ENCODE measurements at regions of chr3 and their contacts with region 1.

Region 1: DNA sequence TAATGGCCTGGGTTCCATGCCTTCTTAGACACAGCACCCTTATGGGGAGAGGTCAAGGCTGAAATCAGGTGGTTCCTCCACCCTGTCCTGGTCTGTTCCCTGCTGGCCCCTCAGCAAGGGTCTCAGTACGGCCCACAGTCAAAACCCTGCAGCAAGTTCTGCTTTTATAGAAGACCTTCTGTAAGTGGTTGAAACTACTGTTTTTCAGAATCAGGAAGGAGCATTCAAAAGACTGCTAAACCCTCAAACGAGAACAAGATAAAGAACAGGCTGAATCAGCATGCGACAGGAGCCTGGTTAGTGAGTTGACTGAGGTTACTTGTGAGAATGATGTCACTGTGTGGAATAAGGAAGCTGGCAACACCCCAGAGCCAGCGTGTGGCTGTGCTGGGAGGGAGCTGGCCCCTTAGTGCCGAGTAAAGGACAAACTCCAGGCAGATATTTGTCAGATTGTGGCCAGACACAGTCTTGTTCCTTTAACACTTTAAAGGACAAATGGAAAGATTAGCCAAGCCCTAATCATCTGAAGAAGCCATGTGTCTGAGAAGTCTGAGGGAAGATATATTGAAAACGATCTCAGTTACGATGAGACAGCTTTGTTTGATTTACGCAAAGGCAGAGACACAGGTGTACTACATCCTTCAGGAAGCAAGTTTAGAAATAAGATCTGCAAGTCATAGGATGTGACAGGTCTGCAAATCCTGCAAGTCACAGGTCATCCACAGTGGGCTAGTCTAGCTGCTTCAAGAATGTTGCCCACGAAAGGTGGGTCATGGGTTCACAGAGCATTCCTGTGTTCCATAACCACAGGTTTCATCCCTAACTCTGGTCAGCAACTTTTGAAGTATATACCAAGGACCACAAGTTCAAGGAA is 54.0 kb downstream of the B3GNT5 start:
- DNase-seq: peak; percentile 65
- H3K4me3 Mint-ChIP-seq: no peak overlapping the region
- H3K27ac Mint-ChIP-seq: peak overlapping the region; percentile 44
- H3K4me1 Mint-ChIP-seq: peaks cover 12% of the 10 kb centered on the region
- H3K27me3 Mint-ChIP-seq: no peaks in the 10 kb centered on the region

Region 2: DNA sequence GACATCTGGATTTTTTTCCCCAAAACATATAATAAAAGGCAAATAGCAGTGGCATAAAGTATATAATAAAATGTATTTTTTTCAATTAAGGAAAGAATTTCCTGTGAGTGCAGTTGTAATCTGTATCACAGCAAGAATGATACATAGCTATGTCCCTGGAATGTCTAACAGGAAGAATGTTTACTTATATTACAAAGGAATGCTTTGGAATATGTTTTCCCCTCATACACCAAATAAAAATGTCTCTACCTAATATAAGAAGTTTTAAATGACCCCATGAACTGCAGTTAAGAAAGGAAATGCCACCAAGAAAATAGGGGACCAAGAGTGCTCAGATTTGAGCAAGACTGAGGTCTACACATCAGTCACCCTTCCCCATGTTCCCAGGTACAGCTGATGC is 551.7 kb before region 1 on chr3:
- CTCF ChIA-PET with region 1: no interaction called
- POLR2A ChIA-PET with region 1: no interaction called
- intact Hi-C with region 1: no loop called
- DNase-seq: no peak
- H3K4me3 Mint-ChIP-seq: no peak overlapping the region
- H3K27ac Mint-ChIP-seq: no peak overlapping the region
- H3K4me1 Mint-ChIP-seq: no peaks in the 10 kb centered on the region
- H3K27me3 Mint-ChIP-seq: peaks cover 2% of the 10 kb centered on the region

Region 3: DNA sequence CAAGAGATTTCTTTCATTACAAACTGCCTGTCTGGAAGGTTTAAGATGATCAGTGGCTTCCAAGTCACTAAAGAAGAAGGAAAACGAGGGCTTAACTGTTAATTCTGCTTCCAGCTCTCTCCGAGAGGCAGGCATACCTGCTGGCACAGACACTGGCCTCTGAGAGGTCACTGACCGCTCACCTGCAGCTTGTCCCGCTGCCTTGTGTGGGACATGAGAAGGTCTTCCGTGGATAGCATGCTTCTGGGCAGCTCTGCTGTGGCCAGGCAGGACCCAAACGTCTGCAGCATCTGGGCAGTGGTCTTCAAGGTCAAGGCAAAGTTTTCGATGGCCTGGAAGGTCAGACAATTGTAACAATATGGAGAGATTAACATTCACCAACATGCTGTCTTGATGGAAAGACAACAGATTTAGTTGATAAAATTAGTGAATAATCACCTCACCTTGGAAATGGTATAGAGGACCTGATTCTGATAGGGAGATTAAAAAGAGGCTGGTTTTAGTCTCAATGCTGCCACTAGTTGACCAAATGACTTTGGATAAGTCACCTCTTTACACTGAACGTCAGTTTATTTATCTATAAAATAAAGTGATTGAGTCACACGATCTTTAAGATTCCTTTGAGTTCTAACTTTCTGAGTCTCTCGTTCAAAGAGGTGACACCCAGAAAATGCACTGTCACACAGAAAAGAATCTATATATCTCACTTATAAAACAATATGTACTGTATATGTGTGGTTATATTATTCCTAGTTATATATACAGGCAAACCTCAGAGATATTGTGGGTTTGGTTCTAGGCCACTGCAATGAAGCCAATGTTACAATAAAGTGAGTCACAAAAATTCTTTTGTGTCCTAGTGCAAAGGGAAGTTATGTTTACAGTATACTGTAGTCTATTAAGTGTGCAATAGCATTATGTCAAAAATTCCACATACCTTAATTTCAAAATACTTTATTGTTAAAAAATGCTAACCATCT is 11.1 kb after region 1 on chr3:
- CTCF ChIA-PET with region 1: no interaction called
- POLR2A ChIA-PET with region 1: no interaction called
- intact Hi-C with region 1: no loop called
- DNase-seq: no peak
- H3K4me3 Mint-ChIP-seq: no peak overlapping the region
- H3K27ac Mint-ChIP-seq: no peak overlapping the region
- H3K4me1 Mint-ChIP-seq: peaks cover 13% of the 10 kb centered on the region
- H3K27me3 Mint-ChIP-seq: no peaks in the 10 kb centered on the region

Region 4: DNA sequence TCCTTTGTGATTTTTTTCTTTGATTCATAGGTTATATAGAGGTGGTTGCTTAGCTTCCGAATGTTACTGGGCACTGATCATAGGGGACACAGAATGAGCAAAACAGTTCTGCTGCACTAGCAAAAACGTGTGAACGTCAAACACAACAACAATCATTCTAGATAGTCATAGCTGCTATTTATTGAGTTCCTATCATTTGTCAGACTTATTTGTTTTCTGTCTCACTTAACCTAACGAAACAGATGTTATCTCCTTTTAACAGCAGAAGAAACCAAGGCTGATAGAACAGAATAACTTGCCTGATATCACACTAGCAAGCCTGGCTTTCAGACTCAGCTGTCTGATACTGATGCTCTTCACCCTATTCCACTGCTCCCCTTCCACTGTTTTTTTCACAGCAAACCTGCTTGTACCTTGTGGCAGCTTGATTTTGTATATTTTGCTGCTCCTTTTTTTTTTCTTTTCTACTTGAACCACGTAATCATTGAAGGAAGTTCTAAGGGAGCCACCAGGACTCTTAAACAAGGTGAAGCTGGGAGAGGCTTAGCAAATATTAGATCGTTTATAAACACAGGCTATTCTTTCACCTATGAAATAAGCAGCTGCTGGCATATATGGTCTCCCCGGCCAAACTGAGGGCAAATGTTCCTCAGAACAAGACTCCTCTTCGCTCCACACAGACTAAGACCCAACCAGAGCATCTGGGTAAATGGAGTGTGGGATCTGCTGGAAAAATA is 42.6 kb after region 1 on chr3:
- CTCF ChIA-PET with region 1: no interaction called
- POLR2A ChIA-PET with region 1: no interaction called
- intact Hi-C with region 1: loop called (anchors 5 kb)
- DNase-seq: no peak
- H3K4me3 Mint-ChIP-seq: no peak overlapping the region
- H3K27ac Mint-ChIP-seq: no peak overlapping the region
- H3K4me1 Mint-ChIP-seq: peaks cover 14% of the 10 kb centered on the region
- H3K27me3 Mint-ChIP-seq: no peaks in the 10 kb centered on the region

Region 5: DNA sequence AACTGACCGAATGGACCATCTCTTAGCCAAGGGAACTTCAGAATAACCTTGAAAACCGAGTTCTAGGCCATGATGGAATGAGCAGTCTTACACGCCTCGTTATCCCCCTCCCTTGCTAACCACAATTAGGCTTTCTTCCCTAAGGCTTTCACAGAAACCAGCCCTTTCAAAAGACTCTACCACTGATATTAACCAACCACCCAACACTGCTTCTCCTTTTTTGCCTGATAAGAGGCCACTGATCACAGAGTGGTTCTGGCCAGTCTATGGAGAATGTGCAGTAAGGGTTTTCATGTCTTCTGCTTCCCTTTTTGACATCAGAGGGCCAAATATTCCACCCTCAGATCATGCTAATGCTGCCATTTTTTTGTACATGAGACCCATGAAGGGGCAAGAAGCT is 62.1 kb after region 1 on chr3:
- CTCF ChIA-PET with region 1: interaction called, 3 read pairs
- POLR2A ChIA-PET with region 1: interaction called, 3 read pairs
- intact Hi-C with region 1: loop called (anchors 5 kb)
- DNase-seq: no peak
- H3K4me3 Mint-ChIP-seq: no peak overlapping the region
- H3K27ac Mint-ChIP-seq: no peak overlapping the region
- H3K4me1 Mint-ChIP-seq: peaks cover 31% of the 10 kb centered on the region
- H3K27me3 Mint-ChIP-seq: no peaks in the 10 kb centered on the region

Measured in activated CD4-positive, alpha-beta memory T cell treated with anti-CD3 and anti-CD28 coated beads for 36 hours (primary cell).